Activated naive CD8-positive, alpha-beta T cell treated with anti-CD3 and anti-CD28 coated beads, Interleukin-2, amount 10 ng/mL, durations not matched to agents 7 days and 5 days (primary cell): ENCODE measurements at regions of chr11 and their contacts with region 1.

Region 1: GRCh38 chr11:67288452-67289225 is 464 bp upstream of the ANKRD13D start:
- DNase-seq: peak; percentile 96
- ATAC-seq: peak; percentile 68
- H3K4me3 Mint-ChIP-seq: peak overlapping the region; percentile 79
- H3K27ac Mint-ChIP-seq: peak overlapping the region; percentile 96
- H3K4me1 Mint-ChIP-seq: peaks cover 40% of the 10 kb centered on the region
- H3K27me3 Mint-ChIP-seq: no peaks in the 10 kb centered on the region

Region 2: DNA sequence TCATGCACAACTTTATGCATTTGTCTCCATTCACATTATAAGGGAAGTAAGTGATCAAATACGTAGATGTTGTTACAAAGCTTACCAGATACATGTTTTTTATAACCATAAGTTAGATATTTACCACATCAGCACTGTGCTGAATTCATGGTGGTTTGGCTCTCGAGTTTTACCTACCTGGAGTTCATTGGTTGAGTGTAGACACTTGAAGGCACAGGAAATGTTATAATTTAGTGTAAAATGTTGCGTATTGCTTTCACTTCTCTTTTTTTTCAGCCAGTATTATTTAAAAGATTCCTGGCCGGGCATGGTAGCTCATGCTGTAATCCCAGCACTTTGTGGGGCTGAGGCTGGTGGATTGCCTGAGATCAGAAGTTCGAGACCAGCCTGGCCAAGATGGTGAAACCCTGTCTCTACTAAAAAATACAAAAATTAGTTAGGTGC is 75.4 kb before region 1 on chr11:
- POLR2A ChIA-PET with region 1: no interaction called
- DNase-seq: no peak
- ATAC-seq: no peak
- H3K4me3 Mint-ChIP-seq: no peak overlapping the region
- H3K27ac Mint-ChIP-seq: peak overlapping the region; percentile 54
- H3K4me1 Mint-ChIP-seq: peaks cover 11% of the 10 kb centered on the region
- H3K27me3 Mint-ChIP-seq: no peaks in the 10 kb centered on the region

Region 3: DNA sequence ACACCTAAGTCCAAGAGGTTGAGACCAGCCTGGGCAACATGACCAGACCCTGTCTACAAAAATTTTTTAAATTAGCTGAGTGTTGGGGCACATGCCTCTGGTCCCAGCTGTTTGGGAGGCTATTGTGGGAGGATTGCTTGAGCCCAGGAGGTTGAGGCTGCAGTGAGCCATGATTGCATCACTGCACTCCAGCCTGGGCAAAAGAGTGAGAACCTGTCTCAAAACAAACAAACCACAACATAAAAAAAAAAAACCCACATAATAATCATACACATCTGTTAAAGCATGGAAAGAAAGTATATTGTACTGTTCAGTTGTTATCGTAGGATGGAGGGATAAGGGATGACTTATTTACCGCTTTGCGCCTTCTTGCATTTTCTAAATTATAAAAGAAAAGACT is 58.2 kb before region 1 on chr11:
- POLR2A ChIA-PET with region 1: no interaction called
- DNase-seq: no peak
- ATAC-seq: no peak
- H3K4me3 Mint-ChIP-seq: no peak overlapping the region
- H3K27ac Mint-ChIP-seq: peak overlapping the region; percentile 9
- H3K4me1 Mint-ChIP-seq: peaks cover 21% of the 10 kb centered on the region
- H3K27me3 Mint-ChIP-seq: no peaks in the 10 kb centered on the region

Region 4: GRCh38 chr11:67277231-67277961 is 11.2 kb before region 1 on chr11:
- POLR2A ChIA-PET with region 1: interaction called, 190 read pairs
- DNase-seq: peak; percentile 90
- ATAC-seq: peak; percentile 87
- H3K4me3 Mint-ChIP-seq: peak overlapping the region; percentile 82
- H3K27ac Mint-ChIP-seq: peak overlapping the region; percentile 97
- H3K4me1 Mint-ChIP-seq: peaks cover 45% of the 10 kb centered on the region
- H3K27me3 Mint-ChIP-seq: no peaks in the 10 kb centered on the region